Activated CD4-positive, alpha-beta T cell treated with anti-CD3 and anti-CD28 coated beads for 36 hours (primary cell): ENCODE measurements at regions of chr7 and their contacts with region 1.

Region 1: DNA sequence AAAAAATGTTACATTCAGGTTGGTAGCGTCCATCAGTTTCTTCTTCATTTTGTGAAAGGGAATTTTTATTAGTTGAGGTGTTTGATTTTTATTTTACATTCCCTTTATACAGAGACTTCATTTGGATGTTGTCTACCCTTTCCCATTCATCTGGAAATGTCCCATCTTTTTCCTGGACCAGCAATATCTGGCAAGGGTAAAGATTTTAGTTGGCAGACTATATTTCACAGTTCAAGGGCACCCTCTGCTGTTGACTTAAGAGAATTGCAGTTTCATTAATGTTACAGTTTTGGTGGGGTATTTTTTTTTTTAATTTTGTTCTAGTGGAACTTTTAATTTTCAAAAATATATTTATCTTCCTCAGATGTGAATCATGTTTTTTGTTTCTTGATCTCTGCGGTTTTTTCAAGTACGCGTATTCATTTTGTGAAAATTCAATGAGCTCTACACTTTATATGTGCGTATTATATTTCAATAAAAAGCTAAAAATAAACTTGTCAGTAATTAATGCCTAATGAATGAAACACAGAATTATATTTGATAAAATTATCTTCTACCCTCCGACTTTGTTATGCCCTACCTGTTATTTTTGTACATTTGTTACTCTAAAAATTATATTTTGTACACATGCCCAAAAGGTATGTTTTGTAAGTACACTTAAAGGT is 97.9 kb upstream of the KLF14 start:
- DNase-seq: no peak
- ATAC-seq: no peak
- H3K4me3 Mint-ChIP-seq: no peak overlapping the region
- H3K27ac Mint-ChIP-seq: no peak overlapping the region
- H3K4me1 Mint-ChIP-seq: no peaks in the 10 kb centered on the region
- H3K27me3 Mint-ChIP-seq: peaks cover 16% of the 10 kb centered on the region

Region 2: GRCh38 chr7:130050773-130051125 is 781.2 kb before region 1 on chr7:
- CTCF ChIA-PET with region 1: interaction called, 3 read pairs
- POLR2A ChIA-PET with region 1: interaction called, 14 read pairs
- intact Hi-C with region 1: no loop called
- DNase-seq: no peak
- ATAC-seq: no peak
- H3K4me3 Mint-ChIP-seq: peak overlapping the region; percentile 90
- H3K27ac Mint-ChIP-seq: peak overlapping the region; percentile 93
- H3K4me1 Mint-ChIP-seq: peaks cover 13% of the 10 kb centered on the region
- H3K27me3 Mint-ChIP-seq: no peaks in the 10 kb centered on the region

Region 3: GRCh38 chr7:130063036-130063435 is 768.9 kb before region 1 on chr7:
- CTCF ChIA-PET with region 1: interaction called, 3 read pairs
- POLR2A ChIA-PET with region 1: no interaction called
- intact Hi-C with region 1: loop called in 1 of 2 experiments (anchors 2 kb)
- DNase-seq: peak; percentile 89
- ATAC-seq: peak; percentile 74
- H3K4me3 Mint-ChIP-seq: no peak overlapping the region
- H3K27ac Mint-ChIP-seq: no peak overlapping the region
- H3K4me1 Mint-ChIP-seq: no peaks in the 10 kb centered on the region
- H3K27me3 Mint-ChIP-seq: no peaks in the 10 kb centered on the region

Region 4: GRCh38 chr7:130356121-130356875 is 475.7 kb before region 1 on chr7:
- CTCF ChIA-PET with region 1: no interaction called
- POLR2A ChIA-PET with region 1: no interaction called
- intact Hi-C with region 1: no loop called
- DNase-seq: no peak
- ATAC-seq: no peak
- H3K4me3 Mint-ChIP-seq: no peak overlapping the region
- H3K27ac Mint-ChIP-seq: peak overlapping the region; percentile 37
- H3K4me1 Mint-ChIP-seq: peaks cover 3% of the 10 kb centered on the region
- H3K27me3 Mint-ChIP-seq: no peaks in the 10 kb centered on the region

Region 5: DNA sequence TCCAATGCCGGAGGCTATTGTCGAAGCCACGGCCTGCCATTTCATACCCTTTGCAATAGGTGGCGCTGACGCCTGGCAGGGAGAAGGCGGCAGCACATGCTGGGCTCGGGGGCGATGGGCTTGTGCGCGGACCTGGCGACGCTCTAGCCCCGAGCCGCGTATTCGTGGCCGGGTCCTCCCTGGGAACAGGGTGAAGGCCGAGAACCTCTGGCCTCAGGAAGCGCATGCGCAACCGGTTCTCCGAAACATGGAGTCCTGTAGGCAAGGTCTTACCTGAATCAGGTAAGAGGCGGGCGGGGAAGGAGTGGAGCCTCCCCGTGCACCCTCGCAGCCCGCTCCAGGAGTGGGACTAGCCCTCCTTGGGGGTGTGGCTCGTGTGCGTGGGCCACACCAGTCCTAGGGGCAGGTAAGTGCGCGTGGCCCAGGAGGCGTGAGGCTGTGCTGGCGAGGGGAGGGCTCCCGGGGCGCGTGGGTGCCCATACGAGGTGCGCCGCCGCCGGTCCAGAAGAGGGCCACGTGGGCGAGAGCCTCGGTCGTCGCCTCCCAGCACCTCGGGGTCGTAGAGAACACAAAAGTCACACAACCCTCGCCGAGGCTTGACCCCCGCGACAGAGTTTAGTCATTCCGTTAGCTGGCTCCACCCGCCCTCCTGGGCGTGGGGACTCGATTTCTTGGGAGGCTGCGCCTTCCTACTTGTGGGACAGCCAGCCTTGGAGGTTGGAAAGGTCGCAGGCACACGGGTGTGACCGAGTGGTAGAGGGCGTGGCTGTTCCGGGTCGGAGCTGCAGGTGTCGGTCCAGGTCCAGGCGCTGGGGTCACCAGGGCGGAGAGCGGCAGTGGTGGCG is 345.6 kb before region 1 on chr7:
- CTCF ChIA-PET with region 1: interaction called, 3 read pairs
- POLR2A ChIA-PET with region 1: no interaction called
- intact Hi-C with region 1: loop called in 1 of 2 experiments (anchors 5 kb)
- DNase-seq: peak; percentile 77
- ATAC-seq: peak; percentile 82
- H3K4me3 Mint-ChIP-seq: peak overlapping the region; percentile 61
- H3K27ac Mint-ChIP-seq: peak overlapping the region; percentile 43
- H3K4me1 Mint-ChIP-seq: peaks cover 24% of the 10 kb centered on the region
- H3K27me3 Mint-ChIP-seq: peaks cover 43% of the 10 kb centered on the region

Region 6: DNA sequence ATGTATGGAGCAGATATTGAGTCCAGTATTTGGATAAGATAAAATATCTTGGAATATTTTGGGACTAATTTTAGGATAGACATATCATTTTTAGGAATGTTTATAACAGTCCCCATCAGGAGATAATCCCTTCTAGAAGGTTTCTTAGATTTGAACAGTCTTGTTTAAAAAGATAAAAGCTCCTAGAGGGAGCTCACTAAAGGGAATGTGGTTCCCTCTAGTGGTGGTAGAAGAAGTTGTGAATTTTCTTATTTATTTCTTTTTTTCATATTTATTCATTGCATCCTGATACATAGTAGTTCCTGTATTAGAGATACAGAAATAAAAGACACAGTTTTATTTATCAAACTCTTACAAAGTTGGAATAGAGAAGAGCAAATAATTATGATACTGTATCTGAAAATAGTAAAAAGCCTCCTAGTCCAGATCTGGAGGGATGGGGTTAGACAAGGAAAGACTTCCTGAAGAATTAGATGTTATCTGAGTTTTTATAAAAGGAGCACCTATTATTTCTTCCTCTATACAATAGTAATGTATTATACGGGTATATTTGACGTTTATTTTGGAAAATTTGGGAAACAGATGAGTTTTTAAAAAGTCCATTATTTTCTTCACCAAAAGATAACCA is 73.4 kb before region 1 on chr7:
- CTCF ChIA-PET with region 1: interaction called, 7 read pairs
- POLR2A ChIA-PET with region 1: no interaction called
- intact Hi-C with region 1: loop called in 1 of 2 experiments (anchors 5 kb)
- DNase-seq: no peak
- ATAC-seq: no peak
- H3K4me3 Mint-ChIP-seq: no peak overlapping the region
- H3K27ac Mint-ChIP-seq: no peak overlapping the region
- H3K4me1 Mint-ChIP-seq: no peaks in the 10 kb centered on the region
- H3K27me3 Mint-ChIP-seq: peaks cover 2% of the 10 kb centered on the region

Region 7: GRCh38 chr7:131507592-131508331 is 675.8 kb after region 1 on chr7:
- CTCF ChIA-PET with region 1: no interaction called
- POLR2A ChIA-PET with region 1: no interaction called
- intact Hi-C with region 1: loop called in 1 of 2 experiments (anchors 10 kb)
- DNase-seq: peak; percentile 92
- ATAC-seq: peak; percentile 89
- H3K4me3 Mint-ChIP-seq: no peak overlapping the region
- H3K27ac Mint-ChIP-seq: no peak overlapping the region
- H3K4me1 Mint-ChIP-seq: peaks cover 21% of the 10 kb centered on the region
- H3K27me3 Mint-ChIP-seq: peaks cover 15% of the 10 kb centered on the region